Endothelial cell of umbilical vein (primary cell): ENCODE measurements at regions of chr2 and their contacts with region 1.

Region 1: DNA sequence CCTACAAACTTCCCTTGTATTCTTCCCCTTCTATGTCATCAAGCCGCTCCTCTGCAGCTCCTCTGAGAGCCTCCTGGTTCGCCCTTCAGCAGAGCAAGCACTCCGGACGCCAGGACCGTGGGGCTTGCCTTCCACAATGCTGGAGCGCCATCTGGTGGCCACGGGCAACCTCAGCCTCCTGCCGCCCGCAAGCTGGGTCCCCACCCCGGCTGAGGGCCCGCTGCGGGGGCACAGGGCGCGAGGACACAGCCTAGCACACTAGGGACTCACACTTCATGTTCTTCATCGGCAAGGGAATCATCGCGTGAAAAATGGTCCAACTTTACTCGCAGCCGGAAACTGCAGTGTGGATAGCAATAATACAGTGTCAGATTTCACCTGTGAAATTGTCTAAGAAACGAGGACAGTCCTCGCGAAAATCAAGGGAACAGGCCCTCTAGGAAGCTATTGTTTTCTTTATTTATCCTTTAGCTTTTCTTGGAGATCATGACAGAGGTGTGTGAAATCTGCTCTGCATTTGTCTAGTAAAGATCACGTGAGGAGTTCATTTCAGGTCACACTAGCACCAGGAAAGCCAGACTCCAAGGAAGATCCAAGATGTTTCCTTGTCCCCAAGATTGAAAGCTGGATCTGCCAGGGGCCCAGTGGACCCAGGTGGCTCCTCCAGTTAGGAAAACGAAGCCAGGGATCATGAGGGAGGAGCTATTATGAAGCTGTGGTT is 5.8 kb downstream of the PRLH start:
- DNase-seq: peak; percentile 82
- H3K4me3 ChIP-seq: no peak overlapping the region
- H3K27ac ChIP-seq: no peak overlapping the region
- H3K4me1 ChIP-seq: no peaks in the 10 kb centered on the region
- H3K27me3 ChIP-seq: no peaks in the 10 kb centered on the region
- CTCF ChIP-seq: peak; percentile 99
- POLR2A ChIP-seq: no peak

Region 2: DNA sequence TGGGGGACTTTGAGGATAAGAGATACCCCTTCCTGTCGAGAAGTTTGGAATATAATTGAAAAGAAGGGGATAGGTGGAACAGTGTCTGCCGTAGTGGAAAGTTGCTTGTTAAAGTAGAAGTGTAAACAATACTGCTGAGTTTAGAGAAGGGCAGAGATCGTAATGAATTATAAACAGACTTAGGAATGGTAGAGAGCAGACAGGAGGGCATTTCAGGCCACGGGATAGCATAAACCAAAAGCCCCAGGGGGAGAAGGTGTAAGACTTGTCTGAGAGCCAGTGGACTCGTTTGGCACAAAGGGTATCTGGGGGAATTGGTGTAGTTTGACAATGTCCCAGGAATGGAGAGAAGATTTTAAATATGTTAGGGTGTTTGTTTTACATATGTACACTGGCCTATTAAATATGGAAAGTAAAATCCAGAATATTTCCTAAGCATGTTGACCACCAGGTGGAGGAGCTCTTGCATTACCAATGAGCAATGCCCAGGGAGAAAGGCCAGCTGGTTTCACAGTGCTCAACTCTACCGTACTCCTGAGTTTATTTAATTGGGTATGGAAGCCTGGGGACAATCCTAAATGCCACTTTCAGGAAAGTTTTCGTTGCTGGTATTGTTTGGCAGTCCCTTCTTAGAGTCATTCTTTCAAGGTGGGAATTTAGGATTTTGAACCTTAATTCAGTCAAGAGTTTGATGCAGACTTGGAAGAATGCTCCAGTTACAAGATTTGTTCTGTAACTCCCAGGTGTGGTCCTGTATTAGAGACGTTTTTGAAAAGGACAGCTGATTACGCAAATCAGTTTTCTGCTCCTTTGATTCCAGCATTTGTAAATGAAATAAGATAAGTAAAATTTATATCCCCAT is 479.0 kb before region 1 on chr2:
- CTCF ChIA-PET with region 1: interaction called, 56 read pairs
- POLR2A ChIA-PET with region 1: interaction called, 3 read pairs
- dilution Hi-C with region 1: no loop called
- intact Hi-C with region 1: loop called (anchors 1 kb)
- DNase-seq: peak; percentile 84
- H3K4me3 ChIP-seq: peak overlapping the region in 1 of 3 experiments; percentile 8
- H3K27ac ChIP-seq: peak overlapping the region; percentile 56
- H3K4me1 ChIP-seq: peaks cover 67% of the 10 kb centered on the region
- H3K27me3 ChIP-seq: no peaks in the 10 kb centered on the region
- CTCF ChIP-seq: peak; percentile 50 to 65
- POLR2A ChIP-seq: no peak

Region 3: DNA sequence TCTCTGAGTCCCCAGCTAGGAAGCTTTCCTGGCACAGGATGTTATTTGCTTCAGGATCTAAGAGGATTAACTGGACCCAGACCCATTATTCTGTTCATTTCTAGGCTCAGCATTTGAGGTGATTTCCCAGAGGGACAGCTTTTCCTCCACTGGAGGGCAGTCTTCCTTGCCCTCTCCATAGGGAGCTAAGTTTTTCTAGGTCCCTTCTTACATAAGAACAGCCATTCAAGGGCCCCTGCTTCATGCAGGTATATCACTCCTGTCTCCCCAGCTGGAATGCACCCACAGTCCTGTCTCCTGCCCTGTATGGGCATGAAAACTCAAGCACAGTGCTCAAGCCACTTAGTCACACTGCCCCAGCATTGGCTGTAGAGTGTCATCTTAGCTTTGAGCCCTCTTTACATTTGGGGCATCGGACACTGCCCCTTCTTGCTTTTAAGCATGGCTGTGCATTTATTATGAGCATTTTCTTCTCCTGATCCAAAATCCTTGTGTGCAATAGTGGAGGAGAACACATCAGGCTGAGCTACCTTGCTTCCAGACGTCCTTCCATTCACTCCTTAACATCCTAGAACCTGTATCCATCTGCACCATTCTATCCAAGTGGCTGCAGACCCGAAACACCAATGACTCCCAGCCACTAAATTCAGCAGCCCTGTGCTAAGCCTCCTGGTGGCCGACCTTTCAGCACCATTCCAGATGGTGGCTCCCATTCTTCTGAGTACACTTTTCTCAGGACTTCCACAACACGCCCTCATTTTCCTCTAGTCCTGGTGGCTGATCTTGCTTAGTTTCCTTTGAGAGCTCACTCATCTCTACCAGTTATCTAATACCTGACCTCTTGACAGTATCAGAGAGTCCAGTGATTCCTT is 406.5 kb before region 1 on chr2:
- CTCF ChIA-PET with region 1: interaction called, 46 read pairs
- POLR2A ChIA-PET with region 1: no interaction called
- dilution Hi-C with region 1: no loop called
- intact Hi-C with region 1: loop called (anchors 2 kb)
- DNase-seq: peak; percentile 49
- H3K4me3 ChIP-seq: no peak overlapping the region
- H3K27ac ChIP-seq: no peak overlapping the region
- H3K4me1 ChIP-seq: no peaks in the 10 kb centered on the region
- H3K27me3 ChIP-seq: peaks cover 0 to 6% of the 10 kb centered on the region in 2 experiments
- CTCF ChIP-seq: peak; percentile 54 to 68
- POLR2A ChIP-seq: no peak

Region 4: GRCh38 chr2:237432484-237433092 is 139.6 kb before region 1 on chr2:
- CTCF ChIA-PET with region 1: interaction called, 10 read pairs
- POLR2A ChIA-PET with region 1: no interaction called
- dilution Hi-C with region 1: no loop called
- intact Hi-C with region 1: no loop called
- DNase-seq: no peak
- H3K4me3 ChIP-seq: no peak overlapping the region
- H3K27ac ChIP-seq: no peak overlapping the region
- H3K4me1 ChIP-seq: peaks cover 8% of the 10 kb centered on the region
- H3K27me3 ChIP-seq: peaks cover 7 to 15% of the 10 kb centered on the region in 2 experiments
- CTCF ChIP-seq: no peak
- POLR2A ChIP-seq: no peak

Region 5: GRCh38 chr2:237483040-237483721 is 89.0 kb before region 1 on chr2:
- CTCF ChIA-PET with region 1: interaction called, 13 read pairs
- POLR2A ChIA-PET with region 1: no interaction called
- dilution Hi-C with region 1: no loop called
- intact Hi-C with region 1: no loop called
- DNase-seq: peak; percentile 26
- H3K4me3 ChIP-seq: no peak overlapping the region
- H3K27ac ChIP-seq: no peak overlapping the region
- H3K4me1 ChIP-seq: no peaks in the 10 kb centered on the region
- H3K27me3 ChIP-seq: peaks cover 55 to 74% of the 10 kb centered on the region in 2 experiments
- CTCF ChIP-seq: peak in 1 of 2 donors; percentile 16
- POLR2A ChIP-seq: no peak

Region 6: GRCh38 chr2:237603718-237604362 is 31.7 kb after region 1 on chr2:
- CTCF ChIA-PET with region 1: interaction called, 33 read pairs
- POLR2A ChIA-PET with region 1: no interaction called
- dilution Hi-C with region 1: no loop called
- intact Hi-C with region 1: no loop called
- DNase-seq: peak; percentile 96
- H3K4me3 ChIP-seq: no peak overlapping the region
- H3K27ac ChIP-seq: peak overlapping the region; percentile 91
- H3K4me1 ChIP-seq: peaks cover 29% of the 10 kb centered on the region
- H3K27me3 ChIP-seq: no peaks in the 10 kb centered on the region
- CTCF ChIP-seq: no peak
- POLR2A ChIP-seq: no peak